H1 (cell line): ENCODE measurements at regions of chr10 and their contacts with region 1.

Region 1: DNA sequence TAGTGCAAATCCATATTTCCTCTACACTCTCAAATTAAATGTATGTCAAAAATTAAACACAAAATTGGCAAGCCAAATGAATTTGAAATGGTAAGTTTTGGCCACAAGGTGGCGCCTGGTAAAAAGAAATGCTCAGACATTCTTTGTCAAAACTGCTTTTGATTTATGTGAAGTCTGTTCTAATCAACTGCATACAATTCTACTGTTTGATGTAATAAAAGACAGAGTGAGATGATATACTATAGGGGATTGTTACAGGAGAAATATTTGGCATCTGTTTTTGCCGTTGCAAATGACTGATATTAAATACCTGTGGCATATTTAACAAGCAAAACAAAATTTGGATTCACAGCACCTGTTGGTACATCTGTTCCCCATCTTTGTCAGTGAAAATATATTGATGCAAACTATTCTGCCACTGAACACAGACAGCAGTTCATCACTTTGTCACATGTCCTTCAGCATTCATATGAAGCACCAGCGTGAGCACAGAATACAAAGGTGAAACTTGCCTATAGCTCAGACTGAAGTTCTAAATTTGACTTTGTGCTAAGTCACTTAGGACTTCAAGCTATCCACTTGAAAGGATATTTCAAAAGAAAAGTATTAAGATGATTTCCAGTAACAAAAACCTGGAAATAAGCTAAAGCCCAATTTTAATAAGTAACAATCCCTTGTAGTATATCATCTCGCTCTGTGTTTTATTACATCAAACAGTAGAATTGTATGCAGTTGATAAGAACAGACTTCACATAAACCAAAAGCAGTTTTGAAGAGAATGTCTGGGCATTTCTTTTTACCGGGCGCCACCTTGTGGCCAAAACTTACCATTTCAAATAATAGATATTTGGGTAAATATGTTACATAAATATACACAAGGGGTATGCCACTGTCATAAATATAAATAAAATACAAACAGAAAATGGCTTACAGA is 10.2 kb upstream of the CH25H start:
- DNase-seq: peak in 1 of 2 experiments; percentile 60
- H3K4me3 ChIP-seq: no peak overlapping the region
- H3K27ac ChIP-seq: no peak overlapping the region
- H3K4me1 ChIP-seq: peaks cover 0 to 6% (median 0%) of the 10 kb centered on the region in 4 experiments; a peak in 2 of 7 replicates
- H3K27me3 ChIP-seq: no peaks in the 10 kb centered on the region
- CTCF ChIP-seq: peak in 2 of 3 experiments; percentile 56; a peak in 2 of 4 replicates
- EP300 ChIP-seq: no peak
- POLR2A ChIP-seq: no peak
- RAD21 ChIP-seq: peak; percentile 65 to 69

Region 2: DNA sequence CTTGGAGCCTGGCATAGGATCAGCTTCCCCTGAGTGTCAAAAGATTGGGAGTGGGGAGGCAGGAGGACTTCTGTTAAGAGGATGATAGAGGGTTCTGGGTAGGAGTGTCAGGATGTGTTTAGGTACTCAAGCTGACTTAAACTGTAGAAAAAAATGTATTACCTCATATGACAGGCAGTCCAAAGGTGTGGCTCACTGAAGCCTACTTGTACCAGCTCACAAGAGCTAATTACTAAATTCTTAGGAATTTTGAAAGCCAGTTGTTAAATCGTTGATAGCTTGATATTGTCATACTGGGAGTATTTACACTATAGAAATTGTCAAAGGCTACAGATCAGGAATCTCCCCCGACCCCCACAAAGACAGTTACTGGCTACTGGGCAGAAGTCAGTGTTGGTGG is 194.6 kb before region 1 on chr10:
- CTCF ChIA-PET with region 1: interaction called, 31 read pairs
- POLR2A ChIA-PET with region 1: no interaction called
- DNase-seq: no peak
- H3K4me3 ChIP-seq: no peak overlapping the region
- H3K27ac ChIP-seq: no peak overlapping the region
- H3K4me1 ChIP-seq: no peaks in the 10 kb centered on the region
- H3K27me3 ChIP-seq: no peaks in the 10 kb centered on the region
- CTCF ChIP-seq: no peak
- EP300 ChIP-seq: no peak
- POLR2A ChIP-seq: no peak
- RAD21 ChIP-seq: no peak

Region 3: GRCh38 chr10:89207181-89207800 is 10.0 kb before region 1 on chr10 and contains the start of gene CH25H:
- CTCF ChIA-PET with region 1: interaction called, 26 read pairs
- POLR2A ChIA-PET with region 1: interaction called, 3 read pairs
- DNase-seq: no peak
- H3K4me3 ChIP-seq: peak within 1 kb of the TSS; percentile 47 to 65 (median 52)
- H3K27ac ChIP-seq: no peak within 1 kb of the TSS
- H3K4me1 ChIP-seq: peaks cover 0 to 16% (median 9%) of the 10 kb centered on the region in 4 experiments; a peak in 6 of 7 replicates
- H3K27me3 ChIP-seq: peaks cover 9 to 46% (median 37%) of the 10 kb centered on the region in 4 experiments
- CTCF ChIP-seq: no peak
- EP300 ChIP-seq: no peak
- POLR2A ChIP-seq: no peak
- RAD21 ChIP-seq: no peak
- total RNA-seq, gene CH25H: 0.56 TPM in 1 of 2 replicates, not detected in the other

Region 4: GRCh38 chr10:89235073-89235798 is 17.9 kb after region 1 on chr10:
- CTCF ChIA-PET with region 1: interaction called, 21 read pairs
- POLR2A ChIA-PET with region 1: no interaction called
- DNase-seq: no peak
- H3K4me3 ChIP-seq: no peak overlapping the region
- H3K27ac ChIP-seq: no peak overlapping the region
- H3K4me1 ChIP-seq: peaks cover 0 to 6% (median 2%) of the 10 kb centered on the region in 4 experiments; a peak in 4 of 7 replicates
- H3K27me3 ChIP-seq: no peaks in the 10 kb centered on the region
- CTCF ChIP-seq: no peak
- EP300 ChIP-seq: no peak
- POLR2A ChIP-seq: no peak
- RAD21 ChIP-seq: no peak

Region 5: DNA sequence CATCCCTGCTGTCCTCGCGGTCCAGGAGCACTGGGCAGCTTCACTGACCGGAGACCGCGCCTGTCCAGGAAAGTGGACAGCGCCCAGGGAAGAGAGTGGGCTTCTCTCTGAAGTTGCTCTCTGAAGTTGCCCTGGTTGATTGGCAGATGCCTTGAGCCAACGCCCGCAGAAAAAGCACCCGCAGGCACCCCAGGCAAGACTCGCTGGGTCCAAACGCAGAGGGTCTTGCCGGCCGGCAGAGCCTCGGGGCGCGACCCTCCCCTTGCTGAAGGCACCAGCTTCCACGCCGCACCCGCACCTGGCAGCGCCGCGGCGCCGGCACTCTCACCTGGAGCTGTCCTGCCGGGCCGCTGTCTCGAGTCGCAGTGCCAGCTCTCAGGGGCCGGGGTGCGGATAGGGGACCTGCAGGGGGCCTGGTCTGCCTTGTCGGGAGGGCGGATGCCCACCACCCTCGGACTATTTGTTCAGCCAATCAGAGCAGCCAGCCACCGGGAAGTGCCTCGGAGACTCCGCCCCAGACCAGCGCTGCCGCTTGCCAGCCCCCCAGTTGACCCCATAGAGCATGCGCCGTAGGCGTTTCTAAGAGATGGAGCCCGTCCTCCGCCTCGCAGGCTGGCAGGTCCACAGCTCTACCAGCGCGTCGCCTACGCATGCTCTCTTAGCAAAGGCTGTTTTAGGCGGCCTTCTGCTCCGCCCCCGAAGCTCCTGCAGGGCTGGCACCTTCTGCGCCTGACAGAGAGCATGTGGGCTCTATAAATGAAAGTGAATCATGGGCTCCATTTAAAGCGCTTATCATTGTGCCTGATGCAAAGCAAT is 34.3 kb after region 1 on chr10 and contains the start of gene LIPA:
- CTCF ChIA-PET with region 1: interaction called, 11 read pairs
- POLR2A ChIA-PET with region 1: no interaction called
- DNase-seq: peak; percentile 92 to 98
- H3K4me3 ChIP-seq: peak within 1 kb of the TSS; percentile 57 to 78 (median 68)
- H3K27ac ChIP-seq: no peak within 1 kb of the TSS
- H3K4me1 ChIP-seq: peaks cover 0 to 6% (median 1%) of the 10 kb centered on the region in 4 experiments; a peak in 3 of 7 replicates
- H3K27me3 ChIP-seq: no peaks in the 10 kb centered on the region; a peak in 1 of 7 replicates
- CTCF ChIP-seq: no peak
- EP300 ChIP-seq: no peak
- POLR2A ChIP-seq: peak in 1 of 2 experiments; percentile 58; a peak in 1 of 3 replicates
- RAD21 ChIP-seq: 0 out of 4 replicates have a peak, but pooled peaks of 1 of the 2 experiments have one; percentile 1
- total RNA-seq, gene LIPA: 32.4 and 35.6 TPM in 2 replicates

Region 6: GRCh38 chr10:89283936-89284475 is 66.7 kb after region 1 on chr10:
- CTCF ChIA-PET with region 1: no interaction called
- POLR2A ChIA-PET with region 1: no interaction called
- DNase-seq: no peak
- H3K4me3 ChIP-seq: no peak overlapping the region
- H3K27ac ChIP-seq: no peak overlapping the region
- H3K4me1 ChIP-seq: peaks cover 0 to 8% (median 3%) of the 10 kb centered on the region in 4 experiments; a peak in 3 of 7 replicates
- H3K27me3 ChIP-seq: no peaks in the 10 kb centered on the region
- CTCF ChIP-seq: no peak
- EP300 ChIP-seq: no peak
- POLR2A ChIP-seq: no peak; a peak in 1 of 3 replicates
- RAD21 ChIP-seq: no peak

Region 7: DNA sequence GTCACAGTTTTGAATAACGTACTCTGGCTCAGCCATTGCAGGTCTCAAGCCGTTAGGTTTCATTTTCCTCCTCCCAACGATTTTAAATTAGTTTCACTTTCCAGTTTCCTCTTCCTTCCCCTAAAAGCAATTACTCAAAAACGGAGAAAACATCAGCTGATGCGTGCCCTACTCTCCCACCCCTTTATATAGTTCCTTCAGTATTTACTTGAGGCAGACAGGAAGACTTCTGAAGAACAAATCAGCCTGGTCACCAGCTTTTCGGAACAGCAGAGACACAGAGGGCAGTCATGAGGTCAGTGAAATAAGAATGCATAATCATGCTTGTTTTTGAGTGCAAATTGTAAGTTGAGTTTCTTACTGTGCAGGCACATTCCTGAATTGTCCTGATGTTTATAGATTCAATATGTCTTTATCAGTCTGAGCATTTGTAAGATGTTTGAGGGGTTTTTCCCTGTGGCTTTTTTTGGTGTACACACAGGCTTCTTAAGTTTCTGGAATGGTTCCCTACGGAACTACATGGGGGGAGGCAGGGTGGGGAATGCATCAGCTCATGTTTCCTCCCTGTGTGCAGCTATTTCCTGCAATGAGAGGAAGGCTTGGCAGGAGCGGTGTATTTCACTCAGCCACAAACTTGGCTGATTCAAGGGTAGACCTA is 110.6 kb after region 1 on chr10 and contains the start of gene IFIT3:
- CTCF ChIA-PET with region 1: no interaction called
- POLR2A ChIA-PET with region 1: no interaction called
- DNase-seq: no peak
- H3K4me3 ChIP-seq: no peak within 1 kb of the TSS
- H3K27ac ChIP-seq: peak within 1 kb of the TSS; percentile 39; the same call in 1 of the 2 replicates
- H3K4me1 ChIP-seq: peaks cover under 1 to 14% (median 6%) of the 10 kb centered on the region in 4 experiments; a peak in 6 of 7 replicates
- H3K27me3 ChIP-seq: no peaks in the 10 kb centered on the region
- CTCF ChIP-seq: no peak
- EP300 ChIP-seq: no peak
- POLR2A ChIP-seq: no peak
- RAD21 ChIP-seq: no peak
- total RNA-seq, gene IFIT3: 0.57 and 0.84 TPM in 2 replicates